K562 (cell line): ENCODE measurements at regions of chr6 and their contacts with region 1.

Region 1: GRCh38 chr6:34324738-34325444 is 67.6 kb downstream of the NUDT3 start:
- DNase-seq: peak in 2 of 4 experiments; percentile 54 to 87
- ATAC-seq: peak; percentile 81
- H3K4me3 ChIP-seq: no peak overlapping the region
- H3K27ac ChIP-seq: peak overlapping the region; percentile 79
- H3K4me1 ChIP-seq: peaks cover 22 to 49% of the 10 kb centered on the region in 2 experiments
- H3K27me3 ChIP-seq: no peaks in the 10 kb centered on the region
- CTCF ChIP-seq: no peak
- EP300 ChIP-seq: no peak
- POLR2A ChIP-seq: 0 out of 2 replicates have a peak, but pooled peaks have one; percentile 24
- RAD21 ChIP-seq: no peak

Region 2: GRCh38 chr6:34341481-34341971 is 16.6 kb after region 1 on chr6:
- CTCF ChIA-PET with region 1: no interaction called
- POLR2A ChIA-PET with region 1: interaction called, 27 read pairs
- in situ Hi-C with region 1: no loop called
- intact Hi-C with region 1: no loop called
- DNase-seq: no peak
- ATAC-seq: no peak
- H3K4me3 ChIP-seq: no peak overlapping the region
- H3K27ac ChIP-seq: no peak overlapping the region
- H3K4me1 ChIP-seq: peaks cover 0 to 14% of the 10 kb centered on the region in 2 experiments; a peak in 2 of 5 replicates
- H3K27me3 ChIP-seq: no peaks in the 10 kb centered on the region
- CTCF ChIP-seq: no peak
- EP300 ChIP-seq: no peak
- POLR2A ChIP-seq: no peak
- RAD21 ChIP-seq: no peak

Region 3: GRCh38 chr6:34370361-34370760 is 45.5 kb after region 1 on chr6:
- CTCF ChIA-PET with region 1: no interaction called
- POLR2A ChIA-PET with region 1: no interaction called
- in situ Hi-C with region 1: no loop called
- intact Hi-C with region 1: no loop called
- DNase-seq: no peak
- ATAC-seq: no peak
- H3K4me3 ChIP-seq: no peak overlapping the region
- H3K27ac ChIP-seq: no peak overlapping the region
- H3K4me1 ChIP-seq: peaks cover 0 to 9% of the 10 kb centered on the region in 2 experiments; a peak in 3 of 5 replicates
- H3K27me3 ChIP-seq: no peaks in the 10 kb centered on the region
- CTCF ChIP-seq: no peak
- EP300 ChIP-seq: no peak
- POLR2A ChIP-seq: no peak
- RAD21 ChIP-seq: no peak

Region 4: DNA sequence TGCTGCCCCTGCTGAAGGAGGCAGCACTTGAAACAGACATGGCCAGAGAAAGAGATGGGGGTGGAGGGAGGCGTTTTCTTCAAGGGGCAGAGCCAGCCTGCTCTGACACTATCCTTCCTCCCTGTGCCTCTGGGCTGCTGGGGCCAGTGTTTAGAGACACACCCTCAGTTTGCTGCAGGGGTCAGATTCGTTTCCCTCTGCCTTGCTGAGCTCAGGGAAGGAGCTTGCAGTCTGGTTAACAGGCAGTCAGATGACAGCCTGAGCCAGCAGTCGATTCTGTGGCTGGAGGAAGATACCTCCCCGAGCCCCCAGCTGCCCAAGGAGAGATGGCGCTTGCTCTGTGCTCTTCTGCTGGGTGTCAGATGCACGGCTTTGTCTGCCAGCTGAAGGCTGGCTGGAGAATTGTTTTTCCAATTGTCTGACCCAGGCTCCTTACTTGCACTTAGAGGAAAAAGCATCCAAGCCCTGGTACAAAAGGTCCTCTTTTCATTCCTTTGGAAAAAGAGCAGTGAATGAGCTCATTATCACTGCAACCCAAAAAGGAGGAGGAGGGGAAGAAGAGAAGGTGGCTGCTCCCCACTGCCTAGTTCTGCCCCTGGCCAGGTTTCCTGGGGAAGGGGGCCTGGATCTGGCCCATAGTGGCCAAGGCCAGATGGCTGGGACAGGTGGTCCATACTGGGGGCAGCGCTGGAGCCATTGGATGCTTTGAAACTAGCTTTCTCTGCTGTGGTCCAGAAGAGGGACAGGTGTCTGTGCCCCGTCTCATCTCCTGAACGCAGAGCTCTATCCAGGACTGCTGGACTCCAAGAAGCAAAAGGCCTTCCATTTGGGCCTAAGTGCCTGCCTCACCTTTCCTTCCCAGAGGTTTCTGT is 728.0 kb after region 1 on chr6:
- CTCF ChIA-PET with region 1: no interaction called
- POLR2A ChIA-PET with region 1: no interaction called
- in situ Hi-C with region 1: no loop called
- intact Hi-C with region 1: no loop called
- DNase-seq: no peak
- ATAC-seq: no peak; the same call in 2 of the 3 replicates
- H3K4me3 ChIP-seq: no peak overlapping the region
- H3K27ac ChIP-seq: no peak overlapping the region
- H3K4me1 ChIP-seq: peaks cover 0 to 5% of the 10 kb centered on the region in 2 experiments; a peak in 4 of 5 replicates
- H3K27me3 ChIP-seq: no peaks in the 10 kb centered on the region
- CTCF ChIP-seq: no peak
- EP300 ChIP-seq: no peak
- POLR2A ChIP-seq: no peak
- RAD21 ChIP-seq: no peak